ENCODE measurements at regions of chr11 and their contacts with region 1.

Region 1: GRCh38 chr11:75204685-75205563 is 35.6 kb upstream of the TPBGL start:
- DNase-seq: peak; percentile 94
- ATAC-seq: peak; percentile 92

Region 2: GRCh38 chr11:75014129-75014528 is 190.8 kb before region 1 on chr11:
- intact Hi-C with region 1: no loop called
- DNase-seq: no peak
- ATAC-seq: peak; percentile 66

Region 3: GRCh38 chr11:75241036-75241905 is 36.3 kb after region 1 on chr11:
- intact Hi-C with region 1: loop called (anchors 5 kb)
- DNase-seq: peak; percentile 92
- ATAC-seq: peak; percentile 97

Region 4: GRCh38 chr11:75270896-75271418 is 66.0 kb after region 1 on chr11:
- intact Hi-C with region 1: no loop called
- DNase-seq: no peak
- ATAC-seq: no peak